Ascending aorta (tissue), 2 donors: ENCODE measurements at regions of chr2 and their contacts with region 1.

Region 1: DNA sequence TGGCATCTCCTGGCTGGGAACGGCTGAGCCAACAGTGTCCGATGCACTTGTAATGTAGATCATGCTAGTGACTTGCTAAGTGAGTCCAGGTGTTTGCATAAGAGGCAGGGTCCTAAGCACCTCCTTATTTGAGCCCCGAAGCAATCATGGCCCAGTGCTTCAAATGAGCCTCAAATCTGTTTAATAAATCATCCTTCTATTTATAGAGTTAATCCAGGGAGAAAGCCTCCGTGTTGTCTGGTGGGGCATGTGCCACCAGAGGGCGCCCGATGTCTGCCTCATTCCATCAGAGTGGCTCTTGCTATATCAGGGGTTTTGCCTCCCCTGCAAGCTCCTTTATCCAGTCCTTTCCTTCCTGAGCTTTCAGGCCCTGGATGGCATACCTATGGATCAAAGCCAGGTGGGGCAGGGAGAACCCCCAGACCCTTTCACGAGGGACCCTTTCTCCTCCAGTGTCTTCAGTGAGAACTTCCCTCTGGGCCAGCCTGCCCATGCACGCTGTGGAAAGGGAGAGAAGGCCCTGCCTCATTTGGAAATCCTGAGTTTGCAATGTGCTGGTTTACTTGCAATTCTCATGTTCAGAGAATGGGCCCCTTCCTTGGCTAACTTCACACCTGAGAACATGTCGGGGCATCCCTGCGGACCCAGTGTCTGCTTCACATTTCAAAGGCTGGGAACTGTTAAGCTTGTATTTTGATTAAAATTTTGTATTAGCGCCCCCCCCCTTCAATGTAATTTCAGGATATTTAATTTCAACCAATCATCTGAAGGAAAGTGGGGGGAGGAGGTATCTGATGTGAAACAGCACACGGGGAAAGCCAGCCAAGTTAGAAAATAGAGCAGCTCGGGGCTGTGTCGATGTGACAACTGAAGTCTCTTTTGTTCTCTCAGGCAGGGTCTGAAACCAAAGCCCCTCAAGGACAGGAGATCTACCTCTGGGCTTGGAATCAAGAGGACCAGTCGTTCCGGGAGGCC is 39.7 kb downstream of the RDH14 start:
- DNase-seq: peak; percentile 19 to 95
- H3K4me3 ChIP-seq: peak overlapping the region in 1 of 2 donors; percentile 17
- H3K27ac ChIP-seq: peak overlapping the region; percentile 53 to 66
- H3K4me1 ChIP-seq: peaks cover 3 to 28% of the 10 kb centered on the region in 2 donors
- H3K27me3 ChIP-seq: no peaks in the 10 kb centered on the region
- CTCF ChIP-seq: peak; percentile 84 to 94 (median 91)

Region 2: GRCh38 chr2:18435421-18436037 is 85.2 kb before region 1 on chr2:
- intact Hi-C with region 1: loop called (anchors 2 kb)
- DNase-seq: no peak
- H3K4me3 ChIP-seq: no peak overlapping the region
- H3K27ac ChIP-seq: no peak overlapping the region
- H3K4me1 ChIP-seq: peaks cover 0 to 10% of the 10 kb centered on the region in 2 donors
- H3K27me3 ChIP-seq: no peaks in the 10 kb centered on the region
- CTCF ChIP-seq: peak in 2 of 3 experiments; percentile 42 to 68

Region 3: DNA sequence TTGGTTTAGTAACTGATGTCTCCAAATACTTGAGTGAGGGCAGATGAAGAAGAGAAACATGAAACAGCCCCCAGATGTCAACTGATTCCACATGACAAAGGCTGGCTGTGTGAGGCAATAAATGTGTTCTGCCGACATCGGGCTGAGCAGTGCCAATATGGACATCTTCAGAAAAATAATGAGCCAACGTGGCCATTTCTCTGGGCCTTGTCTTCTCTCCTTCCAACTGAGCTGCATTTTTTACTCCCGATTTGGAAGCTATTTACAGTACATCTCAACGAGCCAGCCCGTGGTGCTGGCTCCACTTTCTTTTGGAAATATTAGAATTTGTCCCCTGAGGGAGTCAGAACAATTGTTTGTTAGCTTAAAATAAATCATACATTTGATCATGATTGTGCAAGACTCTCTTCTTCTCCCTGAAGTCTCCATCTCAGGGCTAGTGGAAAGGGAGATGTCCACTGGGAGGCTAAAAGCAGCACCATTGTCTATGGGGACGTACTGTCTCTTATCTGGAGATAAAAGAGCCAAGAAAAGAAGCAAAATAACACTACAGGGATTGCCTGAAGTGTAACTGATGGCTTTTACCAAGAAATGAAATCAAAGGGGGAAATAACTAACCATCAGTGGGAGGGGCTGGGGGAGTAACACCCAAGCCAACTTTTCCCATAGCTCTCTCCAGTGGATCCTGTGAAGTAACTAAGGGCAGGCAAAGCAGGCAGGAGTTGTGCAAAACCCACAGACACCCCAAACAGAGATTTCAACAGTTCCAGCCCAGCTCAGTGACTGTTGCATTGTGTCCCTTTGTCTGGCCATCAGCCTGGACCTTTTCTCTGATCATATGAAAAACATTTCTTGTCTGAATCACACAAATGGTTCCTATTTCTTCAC is 75.1 kb before region 1 on chr2:
- intact Hi-C with region 1: no loop called
- DNase-seq: peak in 1 of 2 donors; percentile 76
- H3K4me3 ChIP-seq: no peak overlapping the region
- H3K27ac ChIP-seq: peak overlapping the region; percentile 75 to 77
- H3K4me1 ChIP-seq: peaks cover 5 to 19% of the 10 kb centered on the region in 2 donors
- H3K27me3 ChIP-seq: no peaks in the 10 kb centered on the region
- CTCF ChIP-seq: no peak

Region 4: GRCh38 chr2:18560031-18560796 is 39.5 kb after region 1 on chr2 and contains the start of gene RDH14:
- intact Hi-C with region 1: loop called (anchors 2 kb)
- DNase-seq: peak; percentile 87 to 98
- H3K4me3 ChIP-seq: peak within 1 kb of the TSS; percentile 78 to 90
- H3K27ac ChIP-seq: peak within 1 kb of the TSS; percentile 93 to 95
- H3K4me1 ChIP-seq: peaks cover 5 to 25% of the 10 kb centered on the region in 2 donors
- H3K27me3 ChIP-seq: no peaks in the 10 kb centered on the region
- CTCF ChIP-seq: no peak
- total RNA-seq, gene RDH14: 51.2 TPM

Region 5: DNA sequence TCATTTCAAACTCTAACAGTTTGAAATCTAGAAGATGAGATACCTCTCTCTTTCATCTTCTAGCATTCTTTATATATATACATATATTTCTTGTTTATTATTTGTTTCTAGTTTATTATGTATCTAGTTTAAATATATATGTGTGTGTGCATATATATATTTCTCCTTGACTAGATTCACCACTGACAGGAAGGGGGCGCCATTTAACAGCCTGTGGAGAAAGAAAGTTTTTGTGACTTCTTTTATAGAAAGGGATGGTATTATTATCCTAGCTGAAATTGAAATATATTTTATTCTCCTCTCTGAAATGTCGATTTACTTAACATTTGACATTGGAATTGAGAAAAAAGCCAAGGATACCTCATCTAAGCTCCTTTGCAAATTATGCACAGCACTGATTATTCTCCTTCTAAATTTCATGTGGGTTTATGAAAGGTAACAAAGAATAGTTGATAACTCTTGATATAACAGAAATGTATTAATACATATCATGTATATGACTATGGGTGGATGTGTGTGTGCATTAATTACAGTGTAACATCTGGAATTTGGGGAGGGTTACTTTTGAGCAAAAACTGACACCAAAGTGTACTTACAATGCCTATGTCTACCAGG is 229.3 kb after region 1 on chr2:
- intact Hi-C with region 1: loop called (anchors 2 kb)
- DNase-seq: peak in 1 of 2 donors; percentile 71
- H3K4me3 ChIP-seq: no peak overlapping the region
- H3K27ac ChIP-seq: no peak overlapping the region
- H3K4me1 ChIP-seq: no peaks in the 10 kb centered on the region
- H3K27me3 ChIP-seq: no peaks in the 10 kb centered on the region
- CTCF ChIP-seq: peak; percentile 52 to 83 (median 79)

Region 6: GRCh38 chr2:18883616-18884456 is 363.1 kb after region 1 on chr2:
- intact Hi-C with region 1: no loop called
- DNase-seq: no peak
- H3K4me3 ChIP-seq: no peak overlapping the region
- H3K27ac ChIP-seq: no peak overlapping the region
- H3K4me1 ChIP-seq: no peaks in the 10 kb centered on the region
- H3K27me3 ChIP-seq: no peaks in the 10 kb centered on the region
- CTCF ChIP-seq: peak in 1 of 3 experiments; percentile 26

Region 7: DNA sequence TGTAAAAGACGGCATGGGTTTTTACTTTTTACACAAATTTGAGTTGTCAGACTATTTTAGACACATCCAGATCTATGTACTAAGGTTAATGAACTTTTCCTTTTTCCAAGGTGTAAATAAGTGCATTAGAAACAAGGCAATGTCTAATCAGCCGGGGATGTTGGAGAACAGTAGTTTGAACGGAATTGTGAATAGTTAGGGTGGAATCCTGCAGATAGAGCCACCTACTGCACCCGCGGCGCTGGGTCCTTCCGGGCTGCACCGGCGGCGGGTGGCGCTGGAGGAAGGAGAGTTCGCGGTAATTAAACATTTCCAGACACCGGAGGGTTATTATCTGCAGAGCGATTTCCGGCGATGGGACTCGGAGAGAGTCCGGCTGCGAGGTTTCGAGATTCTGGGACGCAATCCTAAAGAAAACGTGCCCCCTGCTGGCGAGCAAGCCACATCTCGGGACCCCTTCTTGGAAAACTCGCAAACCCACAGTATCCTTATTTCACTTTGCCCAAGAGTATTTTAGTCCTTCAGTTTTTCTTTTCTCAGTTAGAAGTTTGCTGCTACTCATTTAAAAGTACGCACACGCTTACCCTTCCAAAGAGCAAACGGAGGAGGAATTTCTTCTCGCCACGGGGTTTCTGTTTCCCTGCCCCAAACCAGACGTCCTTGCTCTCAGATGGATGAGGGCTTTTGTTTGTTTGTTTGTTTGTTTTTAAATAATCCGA is 842.2 kb after region 1 on chr2:
- intact Hi-C with region 1: loop called (anchors 5 kb)
- DNase-seq: peak in 1 of 2 donors; percentile 87
- H3K4me3 ChIP-seq: peak overlapping the region; percentile 73 to 91
- H3K27ac ChIP-seq: peak overlapping the region; percentile 51 to 96
- H3K4me1 ChIP-seq: peaks cover 11 to 14% of the 10 kb centered on the region in 2 donors
- H3K27me3 ChIP-seq: no peaks in the 10 kb centered on the region
- CTCF ChIP-seq: peak; percentile 67 to 72 (median 68)